HCT116 (cell line): ENCODE measurements at regions of chr11 and their contacts with region 1.

Region 1: DNA sequence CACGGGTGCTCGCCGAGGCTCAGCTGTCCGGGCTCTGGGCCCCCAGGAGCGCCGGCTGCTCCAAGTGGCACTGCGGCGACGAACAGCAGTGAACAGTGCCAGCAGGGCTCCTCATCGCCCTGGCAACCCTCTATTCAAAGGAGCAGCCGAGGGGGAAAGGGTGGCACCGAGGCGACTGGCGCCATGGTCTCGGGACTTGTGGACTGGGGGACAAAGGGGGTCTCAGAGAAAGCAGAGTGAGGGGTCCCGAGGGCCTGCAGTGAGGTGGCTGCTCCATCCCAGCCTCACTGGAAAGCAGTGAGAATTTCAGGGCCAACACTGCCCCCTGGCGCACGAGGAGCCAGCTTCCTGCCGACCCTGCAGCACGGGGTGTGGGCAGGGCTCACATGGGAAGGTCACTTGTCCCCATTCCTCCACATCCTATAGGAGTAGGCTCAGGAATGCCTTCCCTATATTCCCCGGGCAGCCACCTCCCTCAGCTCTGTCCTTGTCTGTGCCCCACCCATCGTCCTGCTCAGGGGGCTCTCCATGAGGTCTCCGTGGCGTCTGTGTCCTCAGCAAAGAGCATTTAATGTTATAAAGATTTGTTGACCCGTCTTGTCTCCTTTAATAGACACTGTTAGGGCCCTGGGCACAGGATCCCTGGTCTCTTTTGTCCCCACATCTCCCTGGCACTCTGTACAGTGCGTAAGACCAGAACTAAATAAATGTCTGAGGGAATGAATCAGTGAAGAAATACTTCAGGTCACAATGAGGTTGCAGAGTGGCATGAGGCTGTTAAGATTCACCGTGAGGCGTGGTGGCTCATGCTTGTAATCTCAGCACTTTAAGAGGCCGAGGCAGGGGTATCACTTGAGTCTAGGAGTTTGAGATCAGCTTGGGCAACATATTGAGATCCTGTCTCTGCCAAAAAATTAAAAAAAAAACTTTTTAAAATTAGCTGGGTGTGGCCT is 26.4 kb downstream of the LRFN4 start:
- DNase-seq: peak; percentile 68
- ATAC-seq: peak; percentile 81
- H3K4me3 ChIP-seq: peak overlapping the region; percentile 31 to 51
- H3K27ac ChIP-seq: peak overlapping the region; percentile 76
- H3K4me1 ChIP-seq: peaks cover 83% of the 10 kb centered on the region in 2 experiments
- H3K27me3 ChIP-seq: no peaks in the 10 kb centered on the region
- CTCF ChIP-seq: peak in 2 of 3 experiments; percentile 80 to 85; a peak in 4 of 6 replicates
- POLR2A ChIP-seq: no peak
- RAD21 ChIP-seq: no peak

Region 2: GRCh38 chr11:66694732-66695207 is 188.5 kb before region 1 on chr11:
- CTCF ChIA-PET with region 1: no interaction called
- POLR2A ChIA-PET with region 1: no interaction called
- RAD21 ChIA-PET with region 1: no interaction called
- intact Hi-C with region 1: loop called (anchors 1 kb)
- DNase-seq: peak; percentile 96
- ATAC-seq: peak; percentile 96
- H3K4me3 ChIP-seq: no peak overlapping the region
- H3K27ac ChIP-seq: peak overlapping the region; percentile 41
- H3K4me1 ChIP-seq: peaks cover 2 to 5% of the 10 kb centered on the region in 2 experiments; a peak in 3 of 4 replicates
- H3K27me3 ChIP-seq: no peaks in the 10 kb centered on the region
- CTCF ChIP-seq: peak; percentile 99
- POLR2A ChIP-seq: no peak
- RAD21 ChIP-seq: peak; percentile 99

Region 3: DNA sequence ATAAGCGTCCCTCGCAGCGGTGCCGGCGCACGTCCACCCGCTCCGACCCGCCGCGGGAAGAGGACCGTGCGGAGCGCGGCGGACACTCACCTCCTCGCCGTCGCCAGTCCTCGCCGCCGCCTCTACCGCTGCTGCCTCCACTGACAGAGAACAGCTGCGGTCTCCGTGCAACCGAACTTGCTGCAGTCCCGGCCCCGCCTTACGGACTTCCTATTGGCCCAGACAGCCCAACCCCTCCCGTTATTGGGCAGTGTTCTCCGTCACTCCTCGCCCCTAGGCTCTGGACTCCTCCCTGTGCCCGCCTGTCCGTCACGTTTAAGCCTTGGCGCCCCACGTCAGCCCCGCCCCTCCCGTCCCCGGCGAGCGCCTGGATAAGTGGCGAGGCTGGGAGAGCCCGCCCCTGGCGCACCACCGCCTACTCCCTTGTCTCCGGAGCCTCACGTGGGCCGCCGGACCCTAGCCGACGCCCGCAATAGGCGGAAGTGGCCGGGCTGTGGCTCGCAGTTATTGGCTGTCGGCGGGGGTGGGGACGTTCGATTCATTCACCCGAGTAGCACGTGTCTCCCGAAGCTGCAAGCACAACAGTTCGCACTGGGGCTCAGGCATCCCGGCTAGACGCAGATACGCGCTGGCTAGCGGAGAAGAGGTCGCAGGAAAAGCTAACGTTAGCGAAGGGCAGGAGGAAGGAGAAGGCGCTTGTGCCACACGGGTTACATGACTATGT is 75.1 kb after region 1 on chr11 and contains the start of gene PC:
- CTCF ChIA-PET with region 1: no interaction called
- POLR2A ChIA-PET with region 1: no interaction called
- RAD21 ChIA-PET with region 1: no interaction called
- intact Hi-C with region 1: loop called (anchors 10 kb)
- DNase-seq: peak; percentile 99
- ATAC-seq: peak; percentile 98
- H3K4me3 ChIP-seq: peak within 1 kb of the TSS; percentile 46 to 65
- H3K27ac ChIP-seq: peak within 1 kb of the TSS; percentile 14; the same call in 1 of the 2 replicates
- H3K4me1 ChIP-seq: peaks cover 17 to 26% of the 10 kb centered on the region in 2 experiments
- H3K27me3 ChIP-seq: no peaks in the 10 kb centered on the region
- CTCF ChIP-seq: no peak
- POLR2A ChIP-seq: no peak
- RAD21 ChIP-seq: no peak
- total RNA-seq, gene PC: 24.1 TPM

Region 4: DNA sequence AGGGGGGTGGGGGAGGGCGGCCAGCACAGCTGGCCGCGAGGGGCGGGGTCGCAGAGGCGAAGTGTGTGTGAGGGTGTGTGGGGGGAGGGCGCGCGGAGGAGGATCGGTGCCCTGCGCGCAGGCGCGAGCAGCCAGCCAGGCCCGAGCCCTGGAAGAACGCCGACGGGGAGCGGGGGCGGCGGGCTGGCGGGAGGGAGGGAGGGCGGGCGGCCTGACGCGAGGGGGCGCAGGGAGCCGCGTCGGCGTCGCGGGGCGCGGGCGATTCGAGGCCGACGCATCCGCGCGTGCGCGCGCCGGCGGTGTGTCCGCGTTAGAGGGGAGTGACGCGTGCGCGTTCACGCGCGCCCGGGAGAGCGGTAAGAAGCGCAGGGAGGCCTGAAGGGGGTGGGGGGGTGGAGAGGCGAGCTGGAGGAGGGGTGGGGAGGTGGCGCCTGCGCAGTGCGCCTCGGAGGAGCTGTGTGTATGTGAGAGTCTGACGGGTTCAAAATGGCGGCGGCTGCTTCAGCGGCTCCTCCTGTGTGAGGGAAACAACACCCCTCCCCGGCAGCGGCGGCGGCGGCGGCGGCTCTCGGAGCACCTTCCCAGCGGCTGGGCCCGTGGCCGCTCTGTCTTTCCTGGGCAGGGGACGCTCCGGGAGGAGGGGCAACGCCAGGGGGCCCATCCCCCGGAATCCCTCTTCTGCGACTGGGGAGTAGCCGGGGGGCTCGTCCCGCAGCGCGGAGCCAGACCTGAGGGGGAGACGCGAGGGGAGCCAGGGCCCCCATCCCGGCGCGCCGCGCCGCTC is 235.7 kb after region 1 on chr11 and contains the start of gene KDM2A:
- CTCF ChIA-PET with region 1: no interaction called
- POLR2A ChIA-PET with region 1: no interaction called
- RAD21 ChIA-PET with region 1: no interaction called
- intact Hi-C with region 1: no loop called
- DNase-seq: peak; percentile 96
- ATAC-seq: peak; percentile 89
- H3K4me3 ChIP-seq: peak within 1 kb of the TSS; percentile 91 to 95
- H3K27ac ChIP-seq: peak within 1 kb of the TSS; percentile 94
- H3K4me1 ChIP-seq: peaks cover 7 to 16% of the 10 kb centered on the region in 2 experiments
- H3K27me3 ChIP-seq: no peaks in the 10 kb centered on the region
- CTCF ChIP-seq: no peak
- POLR2A ChIP-seq: no peak
- RAD21 ChIP-seq: no peak
- total RNA-seq, gene KDM2A: 50.4 TPM

Region 5: GRCh38 chr11:67146516-67147226 is 263.4 kb after region 1 on chr11:
- CTCF ChIA-PET with region 1: no interaction called
- POLR2A ChIA-PET with region 1: no interaction called
- RAD21 ChIA-PET with region 1: no interaction called
- intact Hi-C with region 1: no loop called
- DNase-seq: no peak
- ATAC-seq: no peak
- H3K4me3 ChIP-seq: no peak overlapping the region
- H3K27ac ChIP-seq: no peak overlapping the region
- H3K4me1 ChIP-seq: peaks cover 0 to 8% of the 10 kb centered on the region in 2 experiments; a peak in 1 of 4 replicates
- H3K27me3 ChIP-seq: no peaks in the 10 kb centered on the region
- CTCF ChIP-seq: no peak
- POLR2A ChIP-seq: no peak
- RAD21 ChIP-seq: no peak